PC-9 (cell line): ENCODE measurements at regions of chr10 and their contacts with region 1.

Region 1: GRCh38 chr10:34815185-34816084 is at the start of gene PARD3:
- DNase-seq: peak in 1 of 2 experiments; percentile 64
- H3K4me3 ChIP-seq: peak within 1 kb of the TSS; percentile 63
- H3K27ac ChIP-seq: no peak within 1 kb of the TSS
- H3K4me1 ChIP-seq: peaks cover 25% of the 10 kb centered on the region
- H3K27me3 ChIP-seq: no peaks in the 10 kb centered on the region
- CTCF ChIP-seq: no peak
- total RNA-seq, gene PARD3: 57.4 and 61.9 TPM in 2 replicates

Region 2: GRCh38 chr10:33460505-33461294 is 1354.7 kb before region 1 on chr10:
- CTCF ChIA-PET with region 1: no interaction called
- POLR2A ChIA-PET with region 1: no interaction called
- intact Hi-C with region 1: no loop called
- DNase-seq: no peak
- H3K4me3 ChIP-seq: no peak overlapping the region
- H3K27ac ChIP-seq: no peak overlapping the region
- H3K4me1 ChIP-seq: no peaks in the 10 kb centered on the region
- H3K27me3 ChIP-seq: no peaks in the 10 kb centered on the region
- CTCF ChIP-seq: no peak

Region 3: GRCh38 chr10:34655286-34656170 is 159.9 kb before region 1 on chr10:
- CTCF ChIA-PET with region 1: no interaction called
- POLR2A ChIA-PET with region 1: no interaction called
- intact Hi-C with region 1: loop called (anchors 1 kb)
- DNase-seq: peak; percentile 46 to 50
- H3K4me3 ChIP-seq: no peak overlapping the region
- H3K27ac ChIP-seq: no peak overlapping the region
- H3K4me1 ChIP-seq: peaks cover 7% of the 10 kb centered on the region; the same call in 1 of the 2 replicates
- H3K27me3 ChIP-seq: no peaks in the 10 kb centered on the region
- CTCF ChIP-seq: peak; percentile 79

Region 4: GRCh38 chr10:34723750-34724149 is 91.7 kb before region 1 on chr10:
- CTCF ChIA-PET with region 1: no interaction called
- POLR2A ChIA-PET with region 1: no interaction called
- intact Hi-C with region 1: loop called (anchors 2 kb)
- DNase-seq: no peak
- H3K4me3 ChIP-seq: no peak overlapping the region
- H3K27ac ChIP-seq: no peak overlapping the region
- H3K4me1 ChIP-seq: peaks cover 42% of the 10 kb centered on the region
- H3K27me3 ChIP-seq: no peaks in the 10 kb centered on the region
- CTCF ChIP-seq: no peak

Region 5: GRCh38 chr10:34780818-34781380 is 34.5 kb before region 1 on chr10:
- CTCF ChIA-PET with region 1: no interaction called
- POLR2A ChIA-PET with region 1: no interaction called
- intact Hi-C with region 1: no loop called
- DNase-seq: no peak
- H3K4me3 ChIP-seq: no peak overlapping the region
- H3K27ac ChIP-seq: no peak overlapping the region
- H3K4me1 ChIP-seq: no peaks in the 10 kb centered on the region; the same call in 1 of the 2 replicates
- H3K27me3 ChIP-seq: no peaks in the 10 kb centered on the region
- CTCF ChIP-seq: no peak

Region 6: DNA sequence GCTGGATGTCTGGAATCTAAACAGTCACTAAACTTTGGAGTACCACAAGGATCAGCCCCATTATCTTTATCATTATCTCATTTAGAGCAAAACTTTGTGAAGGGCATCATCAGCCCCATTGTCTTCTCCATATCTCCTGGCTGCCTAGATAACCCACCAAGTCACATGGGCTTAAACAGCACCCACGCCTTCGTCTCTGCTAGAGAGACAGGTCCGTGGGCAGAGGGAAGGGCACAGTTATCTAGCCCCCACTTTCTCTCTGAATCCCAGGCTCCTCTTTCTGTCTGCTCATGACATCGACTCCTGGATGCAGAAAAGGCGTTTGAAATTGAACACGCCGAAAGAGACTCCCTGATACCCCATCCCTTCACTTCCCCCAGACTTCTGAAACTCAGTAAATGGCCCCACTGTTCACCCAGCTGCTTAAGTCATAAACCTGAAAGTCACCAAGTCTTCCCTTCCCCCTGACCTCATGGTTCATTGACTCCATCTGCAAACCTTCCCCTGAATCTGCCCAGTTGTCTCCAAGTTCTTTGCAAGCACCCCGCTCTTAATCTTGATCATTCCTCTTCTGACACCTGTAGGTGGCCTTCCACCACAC is 20.6 kb after region 1 on chr10:
- CTCF ChIA-PET with region 1: no interaction called
- POLR2A ChIA-PET with region 1: no interaction called
- intact Hi-C with region 1: no loop called
- DNase-seq: no peak
- H3K4me3 ChIP-seq: no peak overlapping the region
- H3K27ac ChIP-seq: no peak overlapping the region
- H3K4me1 ChIP-seq: no peaks in the 10 kb centered on the region
- H3K27me3 ChIP-seq: no peaks in the 10 kb centered on the region
- CTCF ChIP-seq: no peak

Region 7: GRCh38 chr10:34889004-34889869 is 73.8 kb after region 1 on chr10:
- CTCF ChIA-PET with region 1: no interaction called
- POLR2A ChIA-PET with region 1: no interaction called
- intact Hi-C with region 1: loop called (anchors 2 kb)
- DNase-seq: peak; percentile 73 to 76
- H3K4me3 ChIP-seq: no peak overlapping the region
- H3K27ac ChIP-seq: peak overlapping the region; percentile 34; the same call in 1 of the 2 replicates
- H3K4me1 ChIP-seq: peaks cover 4% of the 10 kb centered on the region
- H3K27me3 ChIP-seq: no peaks in the 10 kb centered on the region
- CTCF ChIP-seq: no peak

Region 8: GRCh38 chr10:34954168-34954567 is 138.7 kb after region 1 on chr10:
- CTCF ChIA-PET with region 1: interaction called, 6 read pairs
- POLR2A ChIA-PET with region 1: no interaction called
- intact Hi-C with region 1: loop called (anchors 5 kb)
- DNase-seq: peak; percentile 90 to 91
- H3K4me3 ChIP-seq: no peak overlapping the region
- H3K27ac ChIP-seq: no peak overlapping the region
- H3K4me1 ChIP-seq: peaks cover 27% of the 10 kb centered on the region
- H3K27me3 ChIP-seq: no peaks in the 10 kb centered on the region
- CTCF ChIP-seq: no peak

Region 9: DNA sequence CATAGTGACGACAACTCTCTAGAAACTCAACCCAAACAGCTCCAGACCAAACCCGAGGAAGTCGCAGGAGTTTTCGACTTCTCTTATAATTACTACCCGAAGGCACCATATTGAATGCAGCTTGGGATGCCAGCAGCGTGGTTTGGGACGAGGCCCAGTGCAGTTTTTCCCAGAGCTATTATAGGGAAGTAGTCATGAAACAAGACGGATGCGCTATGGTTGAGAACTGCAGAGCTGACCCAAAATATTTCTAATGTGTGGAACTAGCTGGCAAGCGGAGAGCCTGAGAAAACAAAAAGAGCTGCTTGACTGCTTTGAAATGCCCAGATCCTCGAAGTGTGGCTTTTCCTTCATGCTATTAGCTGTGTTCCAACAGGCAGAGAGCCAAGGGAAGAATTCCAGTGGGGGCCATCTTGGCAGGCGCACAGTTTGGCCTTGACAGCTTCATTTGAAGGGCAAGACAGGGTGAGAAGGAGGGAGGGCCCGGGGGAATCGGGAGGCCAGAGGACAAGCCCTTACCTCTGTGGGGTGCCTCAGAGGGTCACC is 152.0 kb after region 1 on chr10:
- CTCF ChIA-PET with region 1: no interaction called
- POLR2A ChIA-PET with region 1: no interaction called
- intact Hi-C with region 1: loop called (anchors 5 kb)
- DNase-seq: no peak
- H3K4me3 ChIP-seq: no peak overlapping the region
- H3K27ac ChIP-seq: no peak overlapping the region
- H3K4me1 ChIP-seq: peaks cover 11% of the 10 kb centered on the region
- H3K27me3 ChIP-seq: no peaks in the 10 kb centered on the region
- CTCF ChIP-seq: no peak

Region 10: GRCh38 chr10:35470260-35470918 is 655.0 kb after region 1 on chr10:
- CTCF ChIA-PET with region 1: no interaction called
- POLR2A ChIA-PET with region 1: no interaction called
- intact Hi-C with region 1: no loop called
- DNase-seq: no peak
- H3K4me3 ChIP-seq: no peak overlapping the region
- H3K27ac ChIP-seq: no peak overlapping the region
- H3K4me1 ChIP-seq: no peaks in the 10 kb centered on the region
- H3K27me3 ChIP-seq: no peaks in the 10 kb centered on the region
- CTCF ChIP-seq: no peak